A673 (cell line): ENCODE measurements at regions of chr1 and their contacts with region 1.

Region 1: GRCh38 chr1:153626922-153627796 is at the start of gene S100A13:
- DNase-seq: peak; percentile 81
- H3K4me3 ChIP-seq: peak within 1 kb of the TSS; percentile 38
- H3K27ac ChIP-seq: peak within 1 kb of the TSS; percentile 69
- H3K4me1 ChIP-seq: peaks cover 23% of the 10 kb centered on the region
- H3K27me3 ChIP-seq: no peaks in the 10 kb centered on the region
- CTCF ChIP-seq: peak; percentile 72
- total RNA-seq, gene S100A13: 11.0 and 18.0 TPM in 2 replicates

Region 2: DNA sequence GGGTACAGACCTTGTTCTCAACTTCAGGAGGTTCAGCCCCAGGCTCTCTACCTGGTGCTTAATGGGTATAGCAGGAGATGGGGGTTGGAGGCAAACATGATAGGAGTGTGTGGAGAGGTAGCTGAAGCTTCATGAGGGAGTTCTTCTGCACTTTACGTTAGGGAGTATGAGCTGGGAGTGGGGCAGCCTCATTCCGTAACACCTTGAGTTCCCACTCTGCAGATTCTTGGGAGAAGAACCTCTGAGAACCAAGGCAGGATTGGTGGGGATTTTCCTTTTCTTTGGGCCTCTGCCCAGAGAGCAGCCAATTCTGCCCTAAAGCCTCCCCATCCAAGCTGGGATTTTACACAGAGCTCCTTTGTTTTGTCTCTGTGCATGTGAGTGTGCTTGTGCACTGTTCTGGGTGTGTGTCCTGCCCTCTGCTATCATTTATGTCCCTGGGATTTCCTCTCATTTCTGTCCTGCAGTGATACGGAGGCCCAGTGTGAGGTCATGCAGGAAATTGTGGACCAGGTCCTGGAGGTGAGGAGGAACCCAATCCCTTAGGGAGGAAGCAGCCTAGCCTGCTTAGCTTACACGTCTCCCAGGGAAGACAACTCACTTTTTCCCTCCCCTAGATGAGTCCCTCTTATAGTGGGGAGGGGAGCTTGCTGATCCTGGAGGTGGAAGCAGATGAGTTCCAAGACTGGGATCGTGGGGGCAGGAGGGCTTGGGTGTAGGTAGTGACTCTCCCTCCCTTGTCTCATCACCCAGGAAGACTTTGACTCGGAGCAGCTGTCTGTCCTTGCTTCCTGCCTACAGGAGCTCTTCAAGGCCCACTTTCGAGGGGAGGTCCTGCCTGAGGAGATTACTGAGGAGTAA is 136.4 kb after region 1 on chr1:
- CTCF ChIA-PET with region 1: no interaction called
- POLR2A ChIA-PET with region 1: no interaction called
- intact Hi-C with region 1: no loop called
- DNase-seq: no peak
- H3K4me3 ChIP-seq: no peak overlapping the region
- H3K27ac ChIP-seq: no peak overlapping the region
- H3K4me1 ChIP-seq: no peaks in the 10 kb centered on the region
- H3K27me3 ChIP-seq: no peaks in the 10 kb centered on the region
- CTCF ChIP-seq: no peak

Region 3: DNA sequence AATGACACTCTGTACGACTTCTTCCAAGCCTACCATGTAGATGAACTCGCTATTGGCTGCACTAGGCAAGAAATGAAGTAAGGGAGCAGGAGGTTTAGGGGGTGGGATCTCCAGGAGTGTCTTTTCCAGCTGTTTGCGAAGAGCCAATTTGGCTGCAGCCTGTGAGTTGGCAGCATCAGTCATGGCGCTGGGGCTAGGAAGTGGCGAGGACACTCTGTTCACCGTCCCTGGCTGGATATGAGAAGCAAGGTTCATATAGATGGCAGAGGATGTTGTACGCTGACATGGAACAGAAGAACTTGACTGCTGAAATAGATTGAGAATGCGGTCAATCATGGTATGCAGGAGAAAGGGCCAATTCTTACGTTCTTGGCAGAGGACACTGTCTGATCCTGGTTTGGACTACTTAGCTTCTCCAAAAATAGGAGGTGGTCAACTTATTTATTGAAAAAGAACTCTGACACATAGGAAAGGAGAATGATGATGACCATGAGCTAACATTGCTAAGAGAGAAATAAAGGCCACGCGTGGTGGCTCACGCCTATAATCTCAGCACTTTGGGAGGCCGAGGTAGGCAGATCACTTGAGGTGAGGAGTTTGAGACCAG is 189.2 kb after region 1 on chr1:
- CTCF ChIA-PET with region 1: no interaction called
- POLR2A ChIA-PET with region 1: interaction called, 10 read pairs
- intact Hi-C with region 1: no loop called
- DNase-seq: no peak
- H3K4me3 ChIP-seq: no peak overlapping the region
- H3K27ac ChIP-seq: no peak overlapping the region
- H3K4me1 ChIP-seq: peaks cover 12% of the 10 kb centered on the region
- H3K27me3 ChIP-seq: no peaks in the 10 kb centered on the region
- CTCF ChIP-seq: no peak